Prostate gland (tissue), 2 donors: ENCODE measurements at regions of chr12 and their contacts with region 1.

Region 1: GRCh38 chr12:114166362-114166761 is 200.2 kb upstream of the RBM19 start:
- DNase-seq: no peak
- H3K4me3 ChIP-seq: no peak overlapping the region
- H3K27ac ChIP-seq: no peak overlapping the region
- H3K4me1 ChIP-seq: no peaks in the 10 kb centered on the region
- H3K27me3 ChIP-seq: no peaks in the 10 kb centered on the region
- CTCF ChIP-seq: peak in 3 of 4 experiments; percentile 13 to 28 (median 14)
- POLR2A ChIP-seq: no peak

Region 2: GRCh38 chr12:114185036-114185435 is 18.7 kb after region 1 on chr12:
- intact Hi-C with region 1: no loop called
- DNase-seq: no peak
- H3K4me3 ChIP-seq: no peak overlapping the region
- H3K27ac ChIP-seq: no peak overlapping the region
- H3K4me1 ChIP-seq: no peaks in the 10 kb centered on the region
- H3K27me3 ChIP-seq: peaks cover 2% of the 10 kb centered on the region
- CTCF ChIP-seq: no peak
- POLR2A ChIP-seq: no peak

Region 3: DNA sequence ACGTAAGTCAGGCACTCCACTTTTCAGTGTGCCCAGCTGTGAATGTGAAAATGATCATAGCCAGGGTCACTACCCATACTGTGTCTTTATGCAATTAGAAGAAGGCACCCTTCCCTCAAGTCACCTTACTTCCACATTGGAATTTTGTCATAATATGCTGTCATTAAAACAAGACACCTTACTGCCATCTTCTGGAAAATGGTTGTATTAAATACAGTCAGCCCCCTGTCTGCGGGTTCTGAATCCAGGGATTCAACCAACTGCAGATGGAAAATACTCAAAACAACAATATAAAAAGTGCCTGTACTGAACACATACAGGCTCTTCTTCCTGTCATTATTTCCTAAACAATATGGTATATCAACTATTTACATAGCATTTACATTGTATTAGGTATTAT is 309.8 kb after region 1 on chr12:
- intact Hi-C with region 1: loop called (anchors 2 kb)
- DNase-seq: no peak
- H3K4me3 ChIP-seq: no peak overlapping the region
- H3K27ac ChIP-seq: no peak overlapping the region
- H3K4me1 ChIP-seq: no peaks in the 10 kb centered on the region
- H3K27me3 ChIP-seq: peaks cover 19% of the 10 kb centered on the region
- CTCF ChIP-seq: peak in 3 of 4 experiments; percentile 30 to 61 (median 30)
- POLR2A ChIP-seq: no peak